ENCODE measurements at regions of chr11 and their contacts with region 1.

Region 1: DNA sequence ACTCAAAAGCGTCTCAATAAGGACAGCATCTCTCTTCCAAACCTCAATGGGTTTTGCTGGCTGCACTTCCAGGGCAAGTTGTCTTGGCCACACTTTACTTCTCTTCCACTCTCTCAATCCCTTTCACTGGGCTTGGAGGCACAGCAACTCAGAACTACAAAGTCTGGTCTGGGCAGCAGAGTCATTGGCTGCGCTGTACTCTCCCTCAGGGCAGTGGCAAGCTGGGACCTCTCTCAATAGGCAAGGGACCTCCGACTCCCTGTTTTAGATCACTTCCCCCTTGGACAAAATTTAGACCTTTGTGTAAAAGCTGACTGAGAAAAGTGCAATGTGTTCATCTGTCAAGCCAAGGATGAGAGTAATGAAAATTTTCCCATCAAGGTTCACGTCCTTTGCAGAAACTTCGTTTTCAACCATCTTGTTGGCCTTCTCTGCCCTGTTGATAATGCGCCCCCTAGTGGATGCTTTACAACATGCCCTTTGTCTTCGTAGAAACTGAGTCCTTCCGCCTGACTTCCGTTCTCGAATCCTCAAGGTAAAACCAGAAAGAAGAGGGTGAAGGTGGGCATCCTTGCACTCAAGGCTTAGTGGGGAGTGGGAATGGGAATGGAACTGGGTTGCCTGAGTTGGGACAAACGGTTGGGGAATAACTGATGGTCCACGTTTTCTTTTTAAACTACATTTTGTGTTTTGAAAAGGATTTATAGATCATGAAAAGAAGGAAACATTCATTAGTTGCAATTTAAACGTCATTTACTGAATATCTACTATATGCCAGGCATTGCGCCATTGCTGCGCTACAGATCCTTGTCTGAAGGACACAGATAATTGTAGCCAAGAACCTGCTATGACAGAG is 99.1 kb downstream of the CD44 start:
- DNase-seq: peak in 7 of 9 donors; percentile 28 to 69 (median 47)
- ATAC-seq: peak; percentile 46
- H3K4me3 ChIP-seq: no peak overlapping the region
- H3K4me3 Mint-ChIP-seq: peak overlapping the region in 5 of 10 donors; percentile 20 to 74 (median 61)
- H3K27ac ChIP-seq: no peak overlapping the region
- H3K27ac Mint-ChIP-seq: peak overlapping the region; percentile 39 to 90 (median 73)
- H3K4me1 ChIP-seq: peaks cover 40 to 46% of the 10 kb centered on the region in 2 donors
- H3K4me1 Mint-ChIP-seq: peaks cover 51 to 94% (median 80%) of the 10 kb centered on the region in 7 donors
- H3K27me3 ChIP-seq: no peaks in the 10 kb centered on the region
- H3K27me3 Mint-ChIP-seq: peaks cover 0 to 9% (median 0%) of the 10 kb centered on the region in 5 donors

Region 2: GRCh38 chr11:34926101-34926830 is 311.8 kb before region 1 on chr11:
- CTCF ChIA-PET with region 1: interaction called, 5 read pairs
- POLR2A ChIA-PET with region 1: no interaction called
- intact Hi-C with region 1: loop called (anchors 1 kb)
- DNase-seq: peak in 7 of 9 donors; percentile 18 to 61 (median 58)
- ATAC-seq: peak; percentile 80
- H3K4me3 ChIP-seq: no peak overlapping the region
- H3K4me3 Mint-ChIP-seq: no peak overlapping the region
- H3K27ac ChIP-seq: no peak overlapping the region
- H3K27ac Mint-ChIP-seq: peak overlapping the region in 1 of 9 donors; percentile 49
- H3K4me1 ChIP-seq: peaks cover 0 to 10% of the 10 kb centered on the region in 2 donors
- H3K4me1 Mint-ChIP-seq: peaks cover 10 to 54% (median 29%) of the 10 kb centered on the region in 7 donors
- H3K27me3 ChIP-seq: no peaks in the 10 kb centered on the region
- H3K27me3 Mint-ChIP-seq: no peaks in the 10 kb centered on the region

Region 3: DNA sequence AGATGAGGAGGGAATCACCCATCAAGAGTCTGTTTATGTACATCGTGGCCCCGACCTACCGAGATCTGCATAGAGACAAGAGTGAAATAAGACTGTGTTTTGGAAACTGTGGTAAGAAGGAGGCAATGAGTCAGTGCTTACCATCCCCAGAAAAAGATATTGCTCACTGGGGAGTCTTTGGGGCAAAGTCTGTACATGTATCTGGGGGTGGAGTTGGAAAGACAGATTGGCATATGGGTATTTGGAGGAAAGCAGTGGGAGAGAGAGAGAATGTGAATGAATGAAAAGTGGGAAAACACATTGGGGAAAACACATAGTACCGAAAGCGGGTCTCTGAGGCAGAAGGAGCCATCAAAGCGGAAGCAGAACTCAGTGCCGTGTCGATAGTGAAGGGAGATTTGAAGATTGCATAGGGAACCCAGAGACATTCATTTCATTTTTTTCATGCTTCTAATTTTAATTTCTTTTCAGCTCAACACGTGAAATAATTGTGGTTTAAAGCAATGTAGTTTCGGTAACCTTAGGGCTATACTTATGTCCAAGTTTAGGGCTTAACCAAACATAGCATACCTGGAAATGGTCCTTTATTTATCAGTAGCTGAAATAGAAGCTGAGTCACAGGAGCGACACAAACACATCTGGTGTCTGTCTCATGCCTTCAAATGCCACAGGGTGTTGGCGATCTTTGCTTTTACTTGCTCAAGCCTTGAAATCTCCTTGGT is 197.7 kb before region 1 on chr11:
- CTCF ChIA-PET with region 1: no interaction called
- POLR2A ChIA-PET with region 1: no interaction called
- intact Hi-C with region 1: loop called (anchors 1 to 5 kb)
- DNase-seq: peak in 8 of 9 donors; percentile 53 to 89 (median 74)
- ATAC-seq: peak; percentile 88
- H3K4me3 ChIP-seq: peak overlapping the region; percentile 60
- H3K4me3 Mint-ChIP-seq: peak overlapping the region; percentile 74 to 94 (median 89)
- H3K27ac ChIP-seq: peak overlapping the region; percentile 86
- H3K27ac Mint-ChIP-seq: peak overlapping the region; percentile 90 to 99 (median 97)
- H3K4me1 ChIP-seq: peaks cover 29 to 45% of the 10 kb centered on the region in 2 donors
- H3K4me1 Mint-ChIP-seq: peaks cover 28 to 77% (median 68%) of the 10 kb centered on the region in 7 donors
- H3K27me3 ChIP-seq: no peaks in the 10 kb centered on the region
- H3K27me3 Mint-ChIP-seq: peaks cover 0 to 29% (median 0%) of the 10 kb centered on the region in 5 donors

Region 4: GRCh38 chr11:35090125-35090524 is 148.0 kb before region 1 on chr11:
- CTCF ChIA-PET with region 1: no interaction called
- POLR2A ChIA-PET with region 1: no interaction called
- intact Hi-C with region 1: no loop called
- DNase-seq: no peak
- ATAC-seq: no peak
- H3K4me3 ChIP-seq: no peak overlapping the region
- H3K4me3 Mint-ChIP-seq: no peak overlapping the region
- H3K27ac ChIP-seq: no peak overlapping the region
- H3K27ac Mint-ChIP-seq: peak overlapping the region in 1 of 9 donors; percentile 65
- H3K4me1 ChIP-seq: peaks cover 14 to 31% of the 10 kb centered on the region in 2 donors
- H3K4me1 Mint-ChIP-seq: peaks cover 37 to 82% (median 71%) of the 10 kb centered on the region in 7 donors
- H3K27me3 ChIP-seq: no peaks in the 10 kb centered on the region
- H3K27me3 Mint-ChIP-seq: peaks cover 0 to 18% (median 0%) of the 10 kb centered on the region in 5 donors

Region 5: GRCh38 chr11:35214792-35215193 is 23.3 kb before region 1 on chr11:
- CTCF ChIA-PET with region 1: no interaction called
- POLR2A ChIA-PET with region 1: interaction called, 4 read pairs
- intact Hi-C with region 1: loop called (anchors 2 kb)
- DNase-seq: no peak
- ATAC-seq: peak; percentile 71
- H3K4me3 ChIP-seq: no peak overlapping the region
- H3K4me3 Mint-ChIP-seq: peak overlapping the region in 7 of 10 donors; percentile 12 to 68 (median 44)
- H3K27ac ChIP-seq: peak overlapping the region; percentile 11
- H3K27ac Mint-ChIP-seq: peak overlapping the region; percentile 26 to 98 (median 92)
- H3K4me1 ChIP-seq: peaks cover 40 to 41% of the 10 kb centered on the region in 2 donors
- H3K4me1 Mint-ChIP-seq: peaks cover 41 to 97% (median 89%) of the 10 kb centered on the region in 7 donors
- H3K27me3 ChIP-seq: no peaks in the 10 kb centered on the region
- H3K27me3 Mint-ChIP-seq: no peaks in the 10 kb centered on the region

Region 6: GRCh38 chr11:35343033-35343598 is 105.0 kb after region 1 on chr11:
- CTCF ChIA-PET with region 1: no interaction called
- POLR2A ChIA-PET with region 1: no interaction called
- intact Hi-C with region 1: loop called in 1 of 2 experiments (anchors 1 kb)
- DNase-seq: peak in 8 of 9 donors; percentile 19 to 69 (median 54)
- ATAC-seq: peak; percentile 62
- H3K4me3 ChIP-seq: no peak overlapping the region
- H3K4me3 Mint-ChIP-seq: peak overlapping the region; percentile 33 to 82 (median 66)
- H3K27ac ChIP-seq: peak overlapping the region; percentile 2
- H3K27ac Mint-ChIP-seq: peak overlapping the region; percentile 82 to 91 (median 85)
- H3K4me1 ChIP-seq: peaks cover 3 to 43% of the 10 kb centered on the region in 2 donors
- H3K4me1 Mint-ChIP-seq: peaks cover 29 to 80% (median 59%) of the 10 kb centered on the region in 7 donors
- H3K27me3 ChIP-seq: no peaks in the 10 kb centered on the region
- H3K27me3 Mint-ChIP-seq: peaks cover 0 to 2% (median 0%) of the 10 kb centered on the region in 5 donors

Region 7: DNA sequence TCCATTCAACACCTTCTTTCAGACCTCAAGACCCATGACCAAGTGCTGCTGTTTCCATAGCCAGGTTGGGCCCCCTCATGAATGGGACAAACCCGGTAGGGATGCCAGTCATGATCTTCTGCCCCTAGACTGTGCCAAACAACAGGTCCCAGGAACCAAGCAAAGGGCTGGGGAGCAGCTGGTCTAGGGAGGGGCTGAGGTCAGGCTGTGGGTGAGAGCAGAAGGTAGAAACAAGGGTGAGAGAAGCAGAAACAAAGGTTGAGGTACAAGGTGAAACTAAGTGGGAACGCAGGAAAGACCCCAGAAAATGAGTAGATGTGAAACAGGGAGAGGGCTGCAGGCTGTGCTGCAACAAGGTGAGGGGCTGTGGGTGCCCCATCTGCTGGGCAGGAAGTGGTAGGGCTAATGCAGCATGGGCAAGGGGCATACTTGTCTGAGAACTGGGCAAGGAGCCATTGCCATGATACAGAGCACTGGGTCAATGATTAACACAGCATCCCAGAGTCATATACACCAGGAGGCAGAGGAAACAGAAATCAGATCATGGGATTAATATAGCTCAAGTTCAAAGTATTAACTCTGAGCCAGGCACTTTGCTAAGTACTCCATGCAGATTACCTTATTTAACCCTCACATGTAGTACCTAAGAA is 135.3 kb after region 1 on chr11:
- CTCF ChIA-PET with region 1: no interaction called
- POLR2A ChIA-PET with region 1: no interaction called
- intact Hi-C with region 1: no loop called
- DNase-seq: no peak
- ATAC-seq: no peak
- H3K4me3 ChIP-seq: no peak overlapping the region
- H3K4me3 Mint-ChIP-seq: peak overlapping the region in 1 of 10 donors; percentile 11
- H3K27ac ChIP-seq: no peak overlapping the region
- H3K27ac Mint-ChIP-seq: peak overlapping the region in 3 of 9 donors; percentile 51 to 67 (median 63)
- H3K4me1 ChIP-seq: no peaks in the 10 kb centered on the region
- H3K4me1 Mint-ChIP-seq: peaks cover 5 to 10% (median 9%) of the 10 kb centered on the region in 7 donors
- H3K27me3 ChIP-seq: no peaks in the 10 kb centered on the region
- H3K27me3 Mint-ChIP-seq: peaks cover 0 to 17% (median 0%) of the 10 kb centered on the region in 5 donors

Region 8: GRCh38 chr11:35511666-35512065 is 273.6 kb after region 1 on chr11:
- CTCF ChIA-PET with region 1: no interaction called
- POLR2A ChIA-PET with region 1: no interaction called
- intact Hi-C with region 1: no loop called
- DNase-seq: no peak
- ATAC-seq: no peak
- H3K4me3 ChIP-seq: no peak overlapping the region
- H3K4me3 Mint-ChIP-seq: no peak overlapping the region
- H3K27ac ChIP-seq: no peak overlapping the region
- H3K27ac Mint-ChIP-seq: no peak overlapping the region
- H3K4me1 ChIP-seq: no peaks in the 10 kb centered on the region
- H3K4me1 Mint-ChIP-seq: no peaks in the 10 kb centered on the region
- H3K27me3 ChIP-seq: no peaks in the 10 kb centered on the region
- H3K27me3 Mint-ChIP-seq: peaks cover 8 to 68% (median 47%) of the 10 kb centered on the region in 5 donors

Measured in naive thymus-derived CD4-positive, alpha-beta T cell (primary cell).